ENCODE measurements at regions of chr11 and their contacts with region 1.

Region 1: DNA sequence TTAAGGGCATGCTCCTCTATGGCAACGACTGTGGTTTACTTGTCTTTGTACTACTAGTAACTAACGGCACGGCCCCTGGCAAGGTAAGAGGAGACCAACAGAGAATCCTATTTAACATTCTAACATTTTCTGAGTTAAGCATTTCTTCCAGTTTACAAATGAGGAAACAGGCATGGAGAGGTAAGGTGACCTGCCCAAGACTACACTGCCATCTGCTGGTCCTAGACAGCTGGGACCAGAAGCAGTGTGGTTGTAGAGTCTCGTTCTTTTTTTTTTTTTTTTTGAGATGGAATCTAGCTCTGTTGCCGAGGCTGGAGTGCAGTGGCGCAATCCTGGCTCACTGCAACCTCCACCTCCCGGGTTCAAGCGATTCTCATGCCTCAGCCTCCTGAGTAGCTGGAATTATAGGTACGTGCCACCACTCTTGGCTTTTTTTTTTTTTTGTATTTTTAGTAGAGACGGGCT is 5.3 kb upstream of the RAPSN start:
- DNase-seq: peak; percentile 51 to 82
- ATAC-seq: peak; percentile 79 to 81
- H3K4me3 ChIP-seq: no peak overlapping the region
- H3K27ac ChIP-seq: no peak overlapping the region
- H3K4me1 ChIP-seq: peaks cover 0 to 7% of the 10 kb centered on the region in 2 donors
- H3K27me3 ChIP-seq: no peaks in the 10 kb centered on the region
- CTCF ChIP-seq: peak; percentile 60 to 84 (median 69)
- POLR2A ChIP-seq: no peak

Region 2: DNA sequence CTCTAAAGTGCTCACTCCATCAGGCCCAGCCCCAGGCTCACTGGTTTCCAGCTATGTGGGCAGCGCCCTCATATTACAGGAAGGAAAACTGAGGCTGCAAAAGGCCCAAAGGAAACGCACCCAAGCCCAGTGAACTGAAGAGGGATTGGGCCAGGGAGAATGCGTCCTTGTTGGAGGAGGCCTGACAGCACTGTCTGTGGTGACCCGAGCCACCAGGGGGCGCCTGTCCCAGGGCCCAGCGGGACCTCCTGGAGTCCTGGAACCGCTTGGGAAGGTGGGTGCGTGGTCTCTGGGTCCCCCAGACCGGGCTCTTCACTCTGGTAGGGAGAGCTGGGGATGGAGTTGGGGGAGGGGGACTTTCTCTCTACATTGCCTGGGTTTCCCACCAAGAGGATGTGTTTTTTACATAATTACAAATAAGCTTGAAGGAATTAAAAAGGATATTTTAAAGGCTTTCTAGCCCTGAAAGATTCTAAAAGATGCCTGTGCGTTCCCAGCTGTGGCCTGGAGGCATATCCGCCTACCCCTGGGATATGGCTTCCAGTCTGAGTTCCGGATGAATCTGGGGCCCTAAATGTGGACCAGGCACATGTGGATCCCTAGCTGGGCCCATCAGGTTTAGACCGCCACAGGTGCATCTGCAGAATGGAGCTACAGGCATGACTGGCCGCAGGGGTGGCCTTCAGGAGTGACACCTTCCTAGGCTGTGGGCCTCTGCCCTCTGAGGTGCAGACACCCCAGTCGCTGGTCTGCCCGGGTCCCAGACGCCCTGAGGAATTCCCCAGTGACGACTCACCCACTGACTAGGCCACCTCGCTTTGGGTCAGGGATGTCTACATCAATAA is 80.1 kb before region 1 on chr11:
- in situ Hi-C with region 1: loop called in 2 of 4 experiments (anchors 5 to 10 kb)
- intact Hi-C with region 1: loop called (anchors 1 kb)
- DNase-seq: peak; percentile 46 to 71
- ATAC-seq: peak; percentile 78 to 87
- H3K4me3 ChIP-seq: no peak overlapping the region
- H3K27ac ChIP-seq: peak overlapping the region in 2 of 4 donors; percentile 10 to 37
- H3K4me1 ChIP-seq: peaks cover 0 to 6% of the 10 kb centered on the region in 2 donors
- H3K27me3 ChIP-seq: no peaks in the 10 kb centered on the region
- CTCF ChIP-seq: peak; percentile 90 to 97 (median 93)
- POLR2A ChIP-seq: no peak

Region 3: GRCh38 chr11:47383071-47383470 is 71.1 kb before region 1 on chr11:
- in situ Hi-C with region 1: loop called in 3 of 4 experiments (anchors 5 to 10 kb)
- intact Hi-C with region 1: no loop called
- DNase-seq: no peak
- ATAC-seq: no peak
- H3K4me3 ChIP-seq: no peak overlapping the region
- H3K27ac ChIP-seq: no peak overlapping the region
- H3K4me1 ChIP-seq: no peaks in the 10 kb centered on the region
- H3K27me3 ChIP-seq: no peaks in the 10 kb centered on the region
- CTCF ChIP-seq: no peak
- POLR2A ChIP-seq: no peak

Measured in gastrocnemius medialis (tissue), 4 donors.